Activated CD4-positive, alpha-beta T cell treated with anti-CD3 and anti-CD28 coated beads, Interleukin-2, amount 10 ng/mL, durations not matched to agents 24 days and 14 days (primary cell): ENCODE measurements at regions of chr5 and their contacts with region 1.

Region 1: DNA sequence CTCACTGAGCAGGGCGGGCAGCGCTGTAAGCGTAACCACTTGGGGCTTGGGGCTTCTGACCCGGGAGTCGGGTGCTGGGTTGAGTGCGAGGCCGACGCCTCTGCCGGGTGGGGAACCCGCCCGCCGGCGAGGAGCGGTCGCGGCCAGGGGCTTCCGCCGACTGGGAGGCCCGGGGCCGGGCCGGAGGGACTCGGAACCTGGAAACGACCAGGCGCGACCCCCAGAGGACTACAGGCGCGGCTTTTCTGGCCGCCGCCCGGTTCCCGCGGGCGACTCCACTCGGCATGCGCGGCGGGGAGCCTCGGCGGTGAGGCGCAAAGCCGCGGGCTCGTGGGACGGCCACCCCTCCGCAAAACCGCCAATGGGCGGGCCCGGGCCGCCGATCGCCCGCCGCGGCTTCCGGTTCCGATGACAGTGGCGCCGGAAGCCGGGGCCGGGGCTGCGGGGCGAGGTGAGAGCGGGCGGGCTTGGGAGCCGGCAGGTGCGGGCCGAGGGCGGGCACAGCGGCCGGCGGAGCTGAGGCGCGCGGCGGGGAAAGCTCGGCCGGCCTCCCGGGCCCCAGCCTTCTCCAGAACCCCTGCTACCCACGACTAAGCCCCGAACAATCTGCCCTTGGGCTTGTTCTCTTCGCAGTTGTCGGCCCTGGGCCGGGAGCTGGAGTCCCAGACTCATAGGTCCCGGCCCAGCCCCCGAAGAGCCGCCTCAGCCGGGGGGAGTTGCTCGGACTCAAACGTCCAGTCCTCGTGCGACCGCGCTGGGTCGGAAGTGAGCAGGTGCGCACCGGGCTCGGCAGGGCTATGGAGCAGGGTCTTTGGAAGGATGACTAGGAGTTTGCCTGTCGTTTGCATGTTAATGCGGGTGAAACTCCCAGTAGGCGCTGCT is at the start of gene RMND5B:
- DNase-seq: peak; percentile 95
- H3K4me3 Mint-ChIP-seq: peak within 1 kb of the TSS; percentile 82
- H3K27ac Mint-ChIP-seq: peak within 1 kb of the TSS; percentile 83
- H3K4me1 Mint-ChIP-seq: peaks cover 14% of the 10 kb centered on the region
- H3K27me3 Mint-ChIP-seq: no peaks in the 10 kb centered on the region
- total RNA-seq, gene RMND5B: 29.3 and 29.5 TPM in 2 replicates

Region 2: DNA sequence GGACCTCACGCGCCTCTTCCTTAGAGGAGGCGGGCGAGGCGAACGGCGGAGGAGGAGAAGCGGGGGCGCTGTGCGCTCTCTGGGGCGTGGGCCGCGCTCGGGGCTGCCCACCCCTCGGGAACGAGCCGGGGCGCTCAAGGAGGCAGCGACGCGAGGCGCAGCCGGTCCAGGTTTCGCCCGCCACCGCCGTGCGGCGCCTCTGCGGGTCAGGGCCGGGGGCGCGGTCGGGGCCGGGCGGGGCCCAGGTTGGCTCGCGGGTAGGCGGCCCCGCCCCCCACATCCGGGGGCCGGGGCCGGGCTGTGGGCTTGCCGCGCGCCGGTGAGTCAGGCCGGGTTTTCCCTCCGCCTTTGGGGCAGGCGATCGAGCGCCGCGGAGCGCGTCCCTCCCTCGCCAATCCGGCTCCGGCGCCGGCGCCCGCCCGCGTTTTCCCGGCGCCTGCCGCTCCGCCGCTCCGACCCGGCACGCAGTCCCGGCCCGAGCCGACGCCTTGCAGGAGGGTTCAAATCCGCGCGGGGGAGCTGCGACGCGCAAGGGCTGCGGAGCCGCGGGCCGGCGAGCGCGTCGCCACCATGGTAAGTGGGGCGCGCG is 17.6 kb before region 1 on chr5 and contains the start of gene N4BP3:
- intact Hi-C with region 1: loop called (anchors 1 kb)
- DNase-seq: peak; percentile 95
- H3K4me3 Mint-ChIP-seq: peak within 1 kb of the TSS; percentile 93
- H3K27ac Mint-ChIP-seq: peak within 1 kb of the TSS; percentile 89
- H3K4me1 Mint-ChIP-seq: peaks cover 33% of the 10 kb centered on the region
- H3K27me3 Mint-ChIP-seq: peaks cover 34% of the 10 kb centered on the region
- total RNA-seq, gene N4BP3: 3.2 and 3.3 TPM in 2 replicates

Region 3: DNA sequence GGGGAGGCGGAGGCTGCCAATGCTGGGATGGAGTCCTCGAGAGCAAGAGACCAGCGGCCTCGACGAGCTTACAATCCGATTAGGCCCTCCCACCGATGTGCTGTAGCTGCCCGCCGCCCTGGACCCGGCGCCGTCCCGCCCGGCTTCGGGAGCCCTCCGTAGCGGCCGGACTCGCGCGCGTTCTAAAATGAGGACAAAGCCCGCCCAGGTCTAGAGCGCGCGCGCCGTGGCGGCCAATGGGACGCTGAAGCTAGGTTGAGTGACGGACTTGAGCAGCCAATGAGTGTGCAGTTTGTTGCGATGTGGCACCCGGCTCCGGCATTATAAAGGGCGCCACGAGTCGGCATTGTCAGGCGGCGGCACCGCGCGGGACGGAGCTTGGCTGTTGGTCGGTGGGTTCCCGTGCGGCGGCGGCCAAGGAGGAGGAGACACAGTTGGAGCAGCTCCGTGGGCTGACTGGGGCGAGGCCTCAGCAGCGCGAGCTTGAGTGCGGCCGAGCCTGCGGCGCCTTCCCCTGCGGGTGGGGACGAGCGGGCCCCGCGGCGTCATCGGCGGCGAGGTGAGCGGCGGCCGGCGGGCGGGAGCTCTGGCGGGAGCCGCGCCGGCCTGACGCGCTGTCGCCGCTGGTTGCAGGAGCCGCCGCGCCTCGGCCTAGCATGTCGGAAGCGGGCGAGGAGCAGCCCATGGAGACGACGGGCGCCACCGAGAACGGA is 73.5 kb after region 1 on chr5 and contains the start of gene HNRNPAB:
- intact Hi-C with region 1: loop called (anchors 1 kb)
- DNase-seq: peak; percentile 99
- H3K4me3 Mint-ChIP-seq: peak within 1 kb of the TSS; percentile 98
- H3K27ac Mint-ChIP-seq: peak within 1 kb of the TSS; percentile 99
- H3K4me1 Mint-ChIP-seq: peaks cover 26% of the 10 kb centered on the region
- H3K27me3 Mint-ChIP-seq: peaks cover 2% of the 10 kb centered on the region
- total RNA-seq, gene HNRNPAB: 492 and 507 TPM in 2 replicates